ENCODE measurements at regions of chr17 and their contacts with region 1.

Region 1: GRCh38 chr17:74391771-74392170 is 24.5 kb downstream of the GPR142 start:
- DNase-seq: no peak
- H3K4me3 ChIP-seq: no peak overlapping the region
- H3K27ac ChIP-seq: no peak overlapping the region
- H3K4me1 ChIP-seq: no peaks in the 10 kb centered on the region
- H3K27me3 ChIP-seq: no peaks in the 10 kb centered on the region
- CTCF ChIP-seq: no peak
- POLR2A ChIP-seq: no peak

Region 2: GRCh38 chr17:74437702-74438101 is 45.9 kb after region 1 on chr17:
- intact Hi-C with region 1: loop called (anchors 2 kb)
- DNase-seq: no peak
- H3K4me3 ChIP-seq: no peak overlapping the region
- H3K27ac ChIP-seq: no peak overlapping the region
- H3K4me1 ChIP-seq: peaks cover 3 to 6% of the 10 kb centered on the region in 2 donors
- H3K27me3 ChIP-seq: no peaks in the 10 kb centered on the region
- CTCF ChIP-seq: peak; percentile 11 to 44 (median 44)
- POLR2A ChIP-seq: no peak